Endothelial cell of umbilical vein (primary cell): ENCODE measurements at regions of chr2 and their contacts with region 1.

Region 1: GRCh38 chr2:55168221-55169154 is 63.6 kb downstream of the CLHC1 start:
- DNase-seq: peak; percentile 83
- H3K4me3 ChIP-seq: no peak overlapping the region
- H3K27ac ChIP-seq: no peak overlapping the region
- H3K4me1 ChIP-seq: peaks cover 28% of the 10 kb centered on the region
- H3K27me3 ChIP-seq: no peaks in the 10 kb centered on the region
- CTCF ChIP-seq: peak; percentile 64 to 67
- POLR2A ChIP-seq: no peak

Region 2: GRCh38 chr2:54966165-54966832 is 202.2 kb before region 1 on chr2:
- CTCF ChIA-PET with region 1: interaction called, 3 read pairs
- POLR2A ChIA-PET with region 1: no interaction called
- dilution Hi-C with region 1: no loop called
- intact Hi-C with region 1: loop called (anchors 2 kb)
- DNase-seq: peak; percentile 47
- H3K4me3 ChIP-seq: no peak overlapping the region
- H3K27ac ChIP-seq: no peak overlapping the region
- H3K4me1 ChIP-seq: peaks cover 16% of the 10 kb centered on the region
- H3K27me3 ChIP-seq: no peaks in the 10 kb centered on the region
- CTCF ChIP-seq: no peak
- POLR2A ChIP-seq: no peak

Region 3: GRCh38 chr2:55014962-55015939 is 153.2 kb before region 1 on chr2:
- CTCF ChIA-PET with region 1: interaction called, 60 read pairs
- POLR2A ChIA-PET with region 1: no interaction called
- dilution Hi-C with region 1: no loop called
- intact Hi-C with region 1: loop called (anchors 1 kb)
- DNase-seq: peak; percentile 72
- H3K4me3 ChIP-seq: no peak overlapping the region
- H3K27ac ChIP-seq: no peak overlapping the region
- H3K4me1 ChIP-seq: peaks cover 63% of the 10 kb centered on the region
- H3K27me3 ChIP-seq: no peaks in the 10 kb centered on the region
- CTCF ChIP-seq: peak; percentile 49
- POLR2A ChIP-seq: no peak

Region 4: GRCh38 chr2:55063713-55064323 is 104.7 kb before region 1 on chr2:
- CTCF ChIA-PET with region 1: interaction called, 9 read pairs
- POLR2A ChIA-PET with region 1: no interaction called
- dilution Hi-C with region 1: no loop called
- intact Hi-C with region 1: loop called (anchors 1 kb)
- DNase-seq: no peak
- H3K4me3 ChIP-seq: no peak overlapping the region
- H3K27ac ChIP-seq: no peak overlapping the region
- H3K4me1 ChIP-seq: no peaks in the 10 kb centered on the region
- H3K27me3 ChIP-seq: no peaks in the 10 kb centered on the region
- CTCF ChIP-seq: peak in 1 of 2 donors; percentile 4
- POLR2A ChIP-seq: no peak

Region 5: GRCh38 chr2:55073000-55073983 is 95.2 kb before region 1 on chr2:
- CTCF ChIA-PET with region 1: interaction called, 16 read pairs
- POLR2A ChIA-PET with region 1: no interaction called
- dilution Hi-C with region 1: no loop called
- intact Hi-C with region 1: loop called (anchors 1 kb)
- DNase-seq: no peak
- H3K4me3 ChIP-seq: no peak overlapping the region
- H3K27ac ChIP-seq: no peak overlapping the region
- H3K4me1 ChIP-seq: peaks cover 7% of the 10 kb centered on the region
- H3K27me3 ChIP-seq: no peaks in the 10 kb centered on the region
- CTCF ChIP-seq: no peak
- POLR2A ChIP-seq: no peak

Region 6: DNA sequence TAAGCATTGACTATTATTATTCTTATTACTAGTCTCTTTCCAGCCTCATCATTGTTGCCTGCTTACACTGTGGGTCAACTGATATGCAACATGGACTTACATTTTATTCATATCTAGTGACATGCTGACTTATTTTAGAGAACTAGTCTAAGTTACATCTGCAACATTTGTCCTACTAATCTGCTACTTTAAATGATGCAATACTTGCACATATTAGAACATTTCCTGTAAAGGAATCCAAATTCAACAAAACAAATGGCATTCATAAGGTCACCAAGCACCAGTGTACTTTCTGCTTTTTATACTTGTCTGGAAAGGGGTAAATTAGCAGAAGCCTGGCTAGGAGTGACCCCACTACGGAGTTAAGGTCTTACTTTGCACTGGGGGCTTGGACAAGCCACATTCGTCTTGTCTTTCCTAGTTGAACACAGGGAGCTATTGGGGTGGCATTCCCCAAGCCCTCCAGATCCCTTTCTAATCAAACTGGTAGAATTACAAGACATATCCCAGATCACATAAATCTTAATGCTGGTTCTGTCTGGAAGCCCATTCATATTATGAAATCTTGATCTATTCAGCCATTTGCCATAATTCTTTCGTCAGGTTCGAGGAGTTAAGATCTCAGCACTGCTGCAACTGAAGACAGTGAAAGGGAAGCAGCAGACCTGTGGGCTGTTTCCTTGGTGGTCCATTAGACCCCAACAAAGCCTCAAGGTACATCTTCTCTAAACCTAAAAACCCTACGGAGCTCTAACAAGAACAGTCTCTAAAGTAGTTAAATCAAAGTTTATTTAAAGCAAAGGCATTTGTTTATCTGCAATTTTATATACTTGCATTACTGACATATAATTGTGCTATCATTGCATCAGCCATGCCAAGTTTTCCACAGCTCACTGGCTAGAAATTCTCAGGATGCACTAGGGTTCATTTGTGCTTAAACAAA is 68.3 kb before region 1 on chr2:
- CTCF ChIA-PET with region 1: interaction called, 12 read pairs
- POLR2A ChIA-PET with region 1: no interaction called
- dilution Hi-C with region 1: no loop called
- intact Hi-C with region 1: loop called (anchors 1 kb)
- DNase-seq: peak; percentile 87
- H3K4me3 ChIP-seq: peak overlapping the region in 1 of 3 experiments; percentile 24
- H3K27ac ChIP-seq: peak overlapping the region; percentile 97
- H3K4me1 ChIP-seq: peaks cover 68% of the 10 kb centered on the region
- H3K27me3 ChIP-seq: no peaks in the 10 kb centered on the region
- CTCF ChIP-seq: no peak
- POLR2A ChIP-seq: peak; percentile 48

Region 7: GRCh38 chr2:55111570-55112228 is 56.8 kb before region 1 on chr2:
- CTCF ChIA-PET with region 1: interaction called, 23 read pairs
- POLR2A ChIA-PET with region 1: no interaction called
- dilution Hi-C with region 1: no loop called
- intact Hi-C with region 1: no loop called
- DNase-seq: peak; percentile 49
- H3K4me3 ChIP-seq: no peak overlapping the region
- H3K27ac ChIP-seq: peak overlapping the region; percentile 44
- H3K4me1 ChIP-seq: peaks cover 48% of the 10 kb centered on the region
- H3K27me3 ChIP-seq: no peaks in the 10 kb centered on the region
- CTCF ChIP-seq: no peak
- POLR2A ChIP-seq: no peak

Region 8: DNA sequence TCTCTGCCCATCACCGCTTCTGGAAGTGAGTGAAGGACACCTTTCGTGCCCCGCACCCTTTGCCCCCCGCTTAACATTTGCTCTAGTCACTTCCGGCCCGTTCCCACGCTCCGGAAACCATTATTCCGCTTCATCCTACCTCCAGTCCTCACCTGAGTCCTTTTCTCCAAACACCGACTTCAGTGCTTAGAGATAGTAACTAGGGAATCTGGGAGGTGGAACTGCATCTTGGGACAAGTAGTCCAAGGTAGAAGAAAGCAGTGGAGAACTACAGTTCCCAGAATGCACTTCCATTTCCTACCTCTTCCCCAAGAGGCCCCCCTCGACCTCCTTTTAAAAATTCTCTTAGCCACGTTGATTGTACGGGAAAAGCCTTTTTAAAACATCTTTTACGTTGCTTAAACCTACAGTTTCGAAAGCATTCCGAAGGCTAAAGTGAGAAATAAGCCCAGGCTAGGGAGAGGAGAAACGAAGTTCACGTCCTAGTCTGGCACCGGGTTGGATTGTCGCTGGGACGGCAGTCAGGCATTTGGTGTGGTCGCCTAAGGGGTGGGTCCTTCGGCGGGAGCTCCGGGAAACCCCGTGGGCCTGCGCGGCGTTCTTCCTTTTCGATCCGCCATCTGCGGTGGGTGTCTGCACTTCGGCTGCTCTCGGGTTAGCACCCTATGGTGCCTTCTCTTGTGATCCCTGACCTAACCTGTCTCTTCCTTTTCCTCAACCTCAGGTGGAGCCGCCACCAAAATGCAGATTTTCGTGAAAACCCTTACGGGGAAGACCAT is 63.8 kb after region 1 on chr2 and contains the starts of genes CLHC1 and RPS27A:
- CTCF ChIA-PET with region 1: no interaction called
- POLR2A ChIA-PET with region 1: no interaction called
- dilution Hi-C with region 1: no loop called
- intact Hi-C with region 1: no loop called
- DNase-seq: peak; percentile 92
- H3K4me3 ChIP-seq: peak within 1 kb of the TSS; percentile 83 to 96 (median 92)
- H3K27ac ChIP-seq: peak within 1 kb of the TSS; percentile 99
- H3K4me1 ChIP-seq: peaks cover 36% of the 10 kb centered on the region
- H3K27me3 ChIP-seq: no peaks in the 10 kb centered on the region
- CTCF ChIP-seq: no peak
- POLR2A ChIP-seq: peak; percentile 92
- total RNA-seq, gene CLHC1: 10.2 and 12.3 TPM in 2 replicates
- total RNA-seq, gene RPS27A: 926 and 939 TPM in 2 replicates

Region 9: GRCh38 chr2:55395724-55396605 is 227.5 kb after region 1 on chr2:
- CTCF ChIA-PET with region 1: no interaction called
- POLR2A ChIA-PET with region 1: no interaction called
- dilution Hi-C with region 1: no loop called
- intact Hi-C with region 1: no loop called
- DNase-seq: no peak
- H3K4me3 ChIP-seq: no peak overlapping the region
- H3K27ac ChIP-seq: no peak overlapping the region
- H3K4me1 ChIP-seq: peaks cover 2% of the 10 kb centered on the region
- H3K27me3 ChIP-seq: no peaks in the 10 kb centered on the region
- CTCF ChIP-seq: no peak
- POLR2A ChIP-seq: no peak